ENCODE measurements at regions of chr9 and their contacts with region 1.

Region 1: GRCh38 chr9:85258823-85259370 is 482.9 kb downstream of the AGTPBP1 start:
- DNase-seq: peak; percentile 69
- H3K4me3 ChIP-seq: no peak overlapping the region
- H3K27ac ChIP-seq: no peak overlapping the region
- H3K4me1 ChIP-seq: no peaks in the 10 kb centered on the region
- H3K27me3 ChIP-seq: peaks cover 2% of the 10 kb centered on the region
- CTCF ChIP-seq: peak; percentile 87 to 98

Region 2: DNA sequence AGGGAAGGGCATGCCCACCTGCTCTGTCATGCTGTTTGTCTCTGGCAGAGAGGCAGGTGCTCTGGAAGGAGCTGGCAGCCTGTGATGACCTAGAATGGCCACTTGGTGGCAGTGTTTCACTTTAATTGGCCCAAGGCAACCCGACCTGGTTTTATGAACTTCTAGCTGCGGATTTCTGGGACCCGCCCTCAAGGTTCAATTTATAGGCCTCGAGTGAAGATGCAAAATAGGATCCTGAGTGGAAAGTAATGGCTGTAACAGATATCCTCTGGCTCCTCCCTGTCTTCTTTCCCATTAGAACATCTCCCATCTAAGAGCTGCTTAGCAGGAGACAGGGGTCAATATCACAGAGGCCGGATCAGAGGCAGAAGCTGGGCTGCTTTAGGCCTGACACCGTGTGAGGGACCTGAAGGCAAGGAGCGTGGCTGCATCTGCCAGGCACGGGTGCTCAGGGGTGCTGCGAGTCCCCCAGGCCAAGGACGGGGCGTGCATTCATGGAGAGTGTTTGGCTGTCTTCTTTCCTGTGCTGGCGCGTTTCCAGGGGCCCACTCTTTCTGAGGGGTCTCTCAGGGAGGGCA is 861.7 kb before region 1 on chr9:
- CTCF ChIA-PET with region 1: no interaction called
- dilution Hi-C with region 1: no loop called
- in situ Hi-C with region 1: loop called (anchors 10 to 25 kb)
- intact Hi-C with region 1: loop called (anchors 1 kb)
- DNase-seq: peak; percentile 43
- H3K4me3 ChIP-seq: no peak overlapping the region
- H3K27ac ChIP-seq: no peak overlapping the region
- H3K4me1 ChIP-seq: no peaks in the 10 kb centered on the region
- H3K27me3 ChIP-seq: no peaks in the 10 kb centered on the region
- CTCF ChIP-seq: peak; percentile 81 to 88

Region 3: GRCh38 chr9:84781458-84781857 is 477.4 kb before region 1 on chr9:
- CTCF ChIA-PET with region 1: no interaction called
- dilution Hi-C with region 1: no loop called
- in situ Hi-C with region 1: no loop called
- intact Hi-C with region 1: loop called (anchors 2 kb)
- DNase-seq: peak; percentile 13
- H3K4me3 ChIP-seq: no peak overlapping the region
- H3K27ac ChIP-seq: no peak overlapping the region
- H3K4me1 ChIP-seq: no peaks in the 10 kb centered on the region
- H3K27me3 ChIP-seq: no peaks in the 10 kb centered on the region
- CTCF ChIP-seq: peak; percentile 55

Region 4: GRCh38 chr9:84839541-84839940 is 419.4 kb before region 1 on chr9:
- CTCF ChIA-PET with region 1: no interaction called
- dilution Hi-C with region 1: no loop called
- in situ Hi-C with region 1: no loop called
- intact Hi-C with region 1: no loop called
- DNase-seq: peak; percentile 52
- H3K4me3 ChIP-seq: no peak overlapping the region
- H3K27ac ChIP-seq: no peak overlapping the region
- H3K4me1 ChIP-seq: peaks cover 6% of the 10 kb centered on the region
- H3K27me3 ChIP-seq: no peaks in the 10 kb centered on the region
- CTCF ChIP-seq: no peak

Region 5: GRCh38 chr9:85009251-85009650 is 249.6 kb before region 1 on chr9:
- CTCF ChIA-PET with region 1: no interaction called
- dilution Hi-C with region 1: loop called (anchors 25 kb)
- in situ Hi-C with region 1: no loop called
- intact Hi-C with region 1: no loop called
- DNase-seq: no peak
- H3K4me3 ChIP-seq: no peak overlapping the region
- H3K27ac ChIP-seq: no peak overlapping the region
- H3K4me1 ChIP-seq: peaks cover 7% of the 10 kb centered on the region
- H3K27me3 ChIP-seq: peaks cover 4% of the 10 kb centered on the region
- CTCF ChIP-seq: no peak

Region 6: GRCh38 chr9:85142968-85143367 is 115.9 kb before region 1 on chr9:
- CTCF ChIA-PET with region 1: no interaction called
- dilution Hi-C with region 1: no loop called
- in situ Hi-C with region 1: no loop called
- intact Hi-C with region 1: loop called (anchors 1 kb)
- DNase-seq: peak; percentile 28
- H3K4me3 ChIP-seq: no peak overlapping the region
- H3K27ac ChIP-seq: no peak overlapping the region
- H3K4me1 ChIP-seq: no peaks in the 10 kb centered on the region
- H3K27me3 ChIP-seq: no peaks in the 10 kb centered on the region
- CTCF ChIP-seq: peak; percentile 69 to 70

Region 7: GRCh38 chr9:85610074-85610860 is 351.4 kb after region 1 on chr9:
- CTCF ChIA-PET with region 1: no interaction called
- dilution Hi-C with region 1: no loop called
- in situ Hi-C with region 1: no loop called
- intact Hi-C with region 1: loop called (anchors 1 kb)
- DNase-seq: peak; percentile 53
- H3K4me3 ChIP-seq: peak overlapping the region in 2 of 3 experiments; percentile 29 to 31
- H3K27ac ChIP-seq: no peak overlapping the region
- H3K4me1 ChIP-seq: no peaks in the 10 kb centered on the region
- H3K27me3 ChIP-seq: no peaks in the 10 kb centered on the region
- CTCF ChIP-seq: peak; percentile 75 to 81

Measured in mammary epithelial cell (primary cell).